H1 (cell line): ENCODE measurements at regions of chr12 and their contacts with region 1.

Region 1: DNA sequence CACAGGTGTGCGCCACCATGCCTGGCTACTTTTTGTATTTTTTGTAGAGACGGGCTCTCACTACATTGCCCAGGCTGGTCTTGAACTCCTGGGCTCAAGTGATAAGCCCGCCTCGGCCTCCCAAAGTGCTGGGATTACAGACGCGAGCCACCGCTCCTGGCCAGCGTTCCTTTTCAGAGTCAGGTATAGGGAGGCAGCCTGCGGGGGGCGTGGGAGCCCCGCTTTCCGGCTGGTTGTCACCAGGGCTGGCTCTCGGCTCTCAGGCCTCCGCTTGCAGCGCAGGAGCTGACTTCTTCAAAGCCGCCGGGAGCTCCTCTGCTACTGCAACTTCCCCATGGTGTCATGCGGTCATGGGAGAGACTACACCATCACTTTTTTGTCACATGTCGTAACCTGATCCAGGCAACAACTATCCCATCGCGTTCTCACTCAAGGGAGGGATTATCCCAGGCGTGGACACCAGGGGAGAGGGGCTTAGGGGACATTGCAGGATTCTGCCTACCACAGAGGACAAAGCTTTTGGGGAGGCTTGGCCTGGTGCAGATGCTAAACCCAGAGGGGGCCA is 129.4 kb downstream of the SCARB1 start:
- DNase-seq: peak; percentile 49 to 82
- H3K4me3 ChIP-seq: peak overlapping the region in 1 of 4 experiments; percentile 8; a peak in 1 of 8 replicates
- H3K27ac ChIP-seq: no peak overlapping the region
- H3K4me1 ChIP-seq: peaks cover 0 to 10% (median 4%) of the 10 kb centered on the region in 4 experiments; a peak in 4 of 7 replicates
- H3K27me3 ChIP-seq: peaks cover 0 to 2% (median 0%) of the 10 kb centered on the region in 4 experiments; a peak in 2 of 7 replicates
- CTCF ChIP-seq: peak; percentile 14 to 54 (median 51); a peak in 3 of 4 replicates
- EP300 ChIP-seq: no peak
- POLR2A ChIP-seq: no peak
- RAD21 ChIP-seq: peak in 1 of 2 experiments; percentile 18; a peak in 2 of 4 replicates

Region 2: DNA sequence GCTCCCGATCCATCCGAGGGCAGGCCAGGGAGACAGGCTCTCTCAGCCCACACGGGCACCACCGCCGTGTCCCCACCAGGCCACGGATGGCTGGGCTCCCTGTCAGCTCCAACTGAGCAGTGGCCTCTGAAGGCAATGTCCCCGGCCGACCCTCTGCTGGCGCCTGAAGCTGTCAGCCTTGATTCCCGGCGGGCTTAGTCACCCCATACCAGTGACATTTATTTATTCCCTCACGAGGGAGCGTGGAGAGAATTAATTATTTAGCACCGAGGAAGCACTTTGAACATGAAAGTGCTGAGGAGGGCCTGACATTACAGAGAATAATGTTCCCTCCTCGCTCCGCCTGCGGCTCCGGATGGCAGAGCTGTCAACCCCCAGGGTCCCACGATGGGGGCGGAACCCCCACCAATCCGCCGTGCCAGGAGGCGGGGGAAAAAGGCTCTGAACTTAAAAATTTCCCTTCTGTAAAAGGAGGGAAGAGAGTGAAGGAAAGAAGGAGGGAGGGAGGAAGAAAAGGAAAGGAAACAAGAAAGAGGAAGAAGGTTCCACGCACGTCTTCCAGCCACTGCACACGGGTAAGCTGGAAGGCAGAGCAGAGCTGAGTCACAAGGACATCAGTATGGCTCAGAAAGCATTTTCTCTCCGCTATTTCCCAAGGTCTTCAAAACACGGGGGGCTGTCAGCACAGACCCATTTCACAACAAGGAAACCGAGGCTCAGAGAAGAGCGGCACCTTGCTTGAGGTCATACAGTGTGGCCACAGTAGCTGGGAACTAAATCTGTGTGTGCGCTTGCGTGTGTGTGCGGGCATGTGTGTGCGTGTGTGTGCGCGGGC is 58.2 kb before region 1 on chr12:
- CTCF ChIA-PET with region 1: no interaction called
- POLR2A ChIA-PET with region 1: no interaction called
- DNase-seq: no peak
- H3K4me3 ChIP-seq: no peak overlapping the region
- H3K27ac ChIP-seq: no peak overlapping the region
- H3K4me1 ChIP-seq: no peaks in the 10 kb centered on the region; a peak in 2 of 7 replicates
- H3K27me3 ChIP-seq: no peaks in the 10 kb centered on the region; a peak in 1 of 7 replicates
- CTCF ChIP-seq: no peak
- EP300 ChIP-seq: no peak
- POLR2A ChIP-seq: no peak
- RAD21 ChIP-seq: no peak

Region 3: DNA sequence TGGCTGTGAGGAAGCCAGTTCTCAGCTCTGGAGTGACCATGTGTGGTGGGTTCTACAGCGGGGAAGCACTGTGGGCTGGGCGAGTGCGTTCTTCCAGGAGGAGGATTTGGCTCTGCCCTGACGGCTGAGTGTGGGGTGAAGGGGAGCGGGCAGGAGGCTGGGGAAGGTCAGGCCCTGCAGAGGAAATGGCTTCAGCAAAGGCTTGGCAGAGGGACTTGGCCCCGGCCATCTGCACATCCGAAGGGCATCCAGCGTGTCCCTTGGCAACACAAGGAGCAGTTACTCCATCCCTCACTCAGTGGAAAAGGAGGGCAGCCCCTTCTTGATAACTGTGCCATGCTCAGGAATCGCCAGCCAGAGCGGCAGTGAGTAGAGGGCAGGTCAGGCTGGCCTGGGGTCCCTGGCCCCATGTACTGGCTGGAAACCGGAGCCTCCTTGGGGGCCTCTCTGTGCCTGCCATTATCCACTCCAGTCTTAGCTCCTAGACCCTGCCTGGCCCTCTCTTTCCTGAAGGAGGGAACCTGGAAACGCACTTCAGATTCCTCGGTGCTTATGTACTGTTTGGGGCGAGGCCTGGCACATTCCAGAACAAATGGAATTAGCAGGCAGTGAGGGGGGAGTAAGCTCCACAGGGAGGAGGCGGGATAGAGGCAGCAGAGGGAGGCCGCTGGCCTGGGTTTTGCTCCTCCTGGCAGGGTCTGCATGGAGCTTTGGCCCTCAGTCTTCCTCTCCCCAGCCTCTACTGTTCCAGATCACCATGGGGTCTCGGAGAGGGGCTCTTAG is 33.3 kb before region 1 on chr12:
- CTCF ChIA-PET with region 1: interaction called, 16 read pairs
- POLR2A ChIA-PET with region 1: interaction called, 3 read pairs
- DNase-seq: no peak
- H3K4me3 ChIP-seq: no peak overlapping the region
- H3K27ac ChIP-seq: no peak overlapping the region; the same call in 1 of the 2 replicates
- H3K4me1 ChIP-seq: peaks cover 0 to 5% (median 1%) of the 10 kb centered on the region in 4 experiments; a peak in 3 of 7 replicates
- H3K27me3 ChIP-seq: no peaks in the 10 kb centered on the region
- CTCF ChIP-seq: no peak
- EP300 ChIP-seq: no peak
- POLR2A ChIP-seq: no peak
- RAD21 ChIP-seq: no peak

Region 4: GRCh38 chr12:124720004-124720680 is 14.2 kb before region 1 on chr12:
- CTCF ChIA-PET with region 1: interaction called, 13 read pairs
- POLR2A ChIA-PET with region 1: interaction called, 5 read pairs
- DNase-seq: no peak
- H3K4me3 ChIP-seq: no peak overlapping the region
- H3K27ac ChIP-seq: no peak overlapping the region
- H3K4me1 ChIP-seq: peaks cover 0 to 3% (median 2%) of the 10 kb centered on the region in 4 experiments; a peak in 4 of 7 replicates
- H3K27me3 ChIP-seq: no peaks in the 10 kb centered on the region
- CTCF ChIP-seq: peak in 2 of 3 experiments; percentile 13 to 26; a peak in 2 of 4 replicates
- EP300 ChIP-seq: no peak
- POLR2A ChIP-seq: no peak
- RAD21 ChIP-seq: peak in 1 of 2 experiments; percentile 20; a peak in 2 of 4 replicates

Region 5: DNA sequence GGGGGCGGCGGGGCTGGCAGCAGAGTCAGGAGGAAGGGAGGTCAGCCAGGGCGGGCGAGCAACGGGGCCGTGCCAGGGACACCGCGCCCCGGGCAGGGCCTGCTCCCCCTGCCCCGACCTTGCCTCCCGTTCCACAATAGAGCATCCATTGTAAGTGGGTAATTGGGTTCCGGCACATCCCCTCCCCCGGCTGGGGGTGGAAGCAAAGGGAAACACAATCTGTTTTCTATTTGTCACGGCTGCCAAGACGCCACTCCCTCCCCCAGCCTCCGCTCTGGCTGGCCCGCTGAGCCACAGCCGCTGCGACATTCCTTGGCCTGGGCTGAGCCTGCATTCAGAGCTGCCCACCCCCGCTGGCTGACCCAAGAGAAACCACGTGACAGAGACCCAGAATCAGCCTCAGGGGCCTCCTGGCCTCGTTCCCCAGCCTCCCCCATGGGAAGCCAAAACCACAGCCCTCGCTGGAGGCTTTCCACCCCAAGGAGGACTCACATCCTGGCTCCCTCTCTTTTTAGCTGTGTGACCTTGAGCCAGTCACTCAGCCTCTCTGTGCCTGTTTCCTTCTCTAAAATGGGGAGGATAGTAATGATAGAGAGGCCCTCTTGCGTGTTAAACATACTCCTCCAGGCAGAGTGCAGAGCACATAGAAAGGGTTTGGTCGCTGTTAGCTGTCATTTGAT is 11.7 kb after region 1 on chr12:
- CTCF ChIA-PET with region 1: interaction called, 76 read pairs
- POLR2A ChIA-PET with region 1: interaction called, 37 read pairs
- DNase-seq: peak; percentile 67 to 82
- H3K4me3 ChIP-seq: peak overlapping the region in 1 of 4 experiments; percentile 33; a peak in 2 of 8 replicates
- H3K27ac ChIP-seq: peak overlapping the region; percentile 70; the same call in 1 of the 2 replicates
- H3K4me1 ChIP-seq: peaks cover 0 to 16% (median 8%) of the 10 kb centered on the region in 4 experiments; a peak in 6 of 7 replicates
- H3K27me3 ChIP-seq: no peaks in the 10 kb centered on the region
- CTCF ChIP-seq: no peak
- EP300 ChIP-seq: peak; percentile 62 to 74; a peak in 2 of 3 replicates
- POLR2A ChIP-seq: no peak; a peak in 1 of 3 replicates
- RAD21 ChIP-seq: peak in 1 of 2 experiments; percentile 24; a peak in 2 of 4 replicates

Region 6: DNA sequence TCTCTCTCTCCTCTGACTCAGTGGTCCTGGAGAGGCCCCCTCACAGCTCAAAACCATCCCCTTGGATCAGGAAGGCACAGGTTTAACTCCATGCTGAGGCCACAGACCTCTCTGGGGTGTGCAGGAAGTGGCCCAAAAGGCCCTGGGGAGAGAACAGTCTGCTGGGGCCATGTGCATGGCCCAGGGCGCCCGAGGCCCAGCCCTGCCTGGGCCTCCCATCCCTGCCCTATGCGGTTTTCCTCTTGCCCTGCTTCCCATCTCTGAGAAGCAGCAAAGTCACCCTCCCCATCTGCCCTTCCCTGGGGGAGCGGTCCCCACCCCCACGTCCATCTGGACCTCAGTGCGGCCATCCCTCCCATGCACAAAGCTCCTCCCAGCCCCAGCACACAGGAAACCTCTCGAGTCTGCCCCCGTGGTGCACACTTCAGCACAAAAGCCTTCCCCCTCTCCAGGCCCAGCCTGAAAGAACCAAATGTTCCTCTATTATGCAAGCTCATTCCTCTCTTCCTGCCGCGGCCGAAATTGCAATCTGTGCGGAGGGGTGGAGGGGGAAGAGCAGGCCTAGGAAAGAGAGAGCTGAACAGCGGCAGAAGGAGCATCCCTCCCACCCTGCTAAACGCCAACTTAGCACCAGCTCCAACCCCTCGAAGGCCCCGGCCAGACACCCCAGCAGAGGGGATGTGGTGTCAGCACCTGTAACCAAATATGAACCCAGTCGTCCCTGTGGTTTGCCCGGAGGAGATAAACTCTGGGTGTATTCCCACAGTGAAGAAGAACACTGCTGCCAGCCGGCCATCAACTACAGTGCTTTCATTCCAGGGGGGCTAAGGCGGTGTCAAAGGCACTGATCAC is 20.9 kb after region 1 on chr12:
- CTCF ChIA-PET with region 1: interaction called, 159 read pairs
- POLR2A ChIA-PET with region 1: interaction called, 3 read pairs
- DNase-seq: peak in 1 of 2 experiments; percentile 27
- H3K4me3 ChIP-seq: no peak overlapping the region
- H3K27ac ChIP-seq: no peak overlapping the region
- H3K4me1 ChIP-seq: peaks cover 0 to 16% (median 9%) of the 10 kb centered on the region in 4 experiments; a peak in 6 of 7 replicates
- H3K27me3 ChIP-seq: peaks cover 0 to 2% (median 0%) of the 10 kb centered on the region in 4 experiments; a peak in 2 of 7 replicates
- CTCF ChIP-seq: no peak
- EP300 ChIP-seq: no peak
- POLR2A ChIP-seq: no peak
- RAD21 ChIP-seq: no peak

Region 7: DNA sequence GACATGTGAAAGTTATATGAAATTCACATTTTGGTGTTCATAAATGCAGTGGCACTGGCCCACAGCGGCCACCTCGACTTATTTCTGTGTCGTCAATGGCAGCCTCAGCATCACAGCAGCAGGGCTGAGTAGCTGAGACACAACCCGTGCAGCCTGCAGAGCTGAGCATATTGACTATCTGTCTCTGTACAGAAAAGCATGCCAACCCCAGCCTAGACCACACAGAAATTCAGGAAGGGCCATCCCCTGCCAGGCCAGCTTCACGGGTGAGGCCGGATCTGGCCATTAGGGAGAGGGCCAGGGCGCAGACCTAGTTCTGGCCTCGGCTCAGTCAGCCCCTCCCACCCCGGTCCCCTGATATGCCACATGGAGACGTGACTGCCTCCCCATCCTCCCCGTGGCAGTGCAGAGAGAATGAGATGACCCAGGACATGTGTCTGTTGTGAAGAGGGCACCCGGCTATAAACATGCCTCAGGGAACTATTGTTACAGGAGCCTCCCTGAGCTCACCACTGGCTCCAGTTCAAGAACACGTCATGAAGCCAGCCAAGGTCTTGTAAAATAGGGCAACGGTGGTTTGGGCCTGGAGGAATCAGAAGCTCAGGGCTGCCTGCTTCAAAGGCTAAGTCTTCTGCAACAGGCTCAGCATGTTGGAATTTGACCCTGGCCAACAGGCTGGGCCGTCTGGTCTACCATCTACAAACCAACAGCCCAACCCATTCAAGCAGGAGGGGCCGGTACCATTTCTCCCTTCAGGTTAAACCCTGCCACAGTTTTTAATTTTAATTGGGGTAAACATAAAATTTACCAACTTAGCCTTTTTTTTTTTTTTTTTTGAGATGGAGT is 103.9 kb after region 1 on chr12:
- CTCF ChIA-PET with region 1: no interaction called
- POLR2A ChIA-PET with region 1: no interaction called
- DNase-seq: no peak
- H3K4me3 ChIP-seq: no peak overlapping the region
- H3K27ac ChIP-seq: no peak overlapping the region
- H3K4me1 ChIP-seq: peaks cover 0 to 21% (median 16%) of the 10 kb centered on the region in 4 experiments; a peak in 6 of 7 replicates
- H3K27me3 ChIP-seq: no peaks in the 10 kb centered on the region
- CTCF ChIP-seq: no peak
- EP300 ChIP-seq: no peak
- POLR2A ChIP-seq: no peak
- RAD21 ChIP-seq: no peak